Sigmoid colon (tissue), 7 donors: ENCODE measurements at regions of chr10 and their contacts with region 1.

Region 1: GRCh38 chr10:108544494-108545120 is 1378.7 kb downstream of the XPNPEP1 start:
- DNase-seq: peak; percentile 75
- H3K4me3 ChIP-seq: no peak overlapping the region
- H3K27ac ChIP-seq: no peak overlapping the region
- H3K4me1 ChIP-seq: no peaks in the 10 kb centered on the region
- H3K27me3 ChIP-seq: no peaks in the 10 kb centered on the region
- CTCF ChIP-seq: peak in 3 of 4 experiments; percentile 67 to 91 (median 69)
- EP300 ChIP-seq: no peak
- POLR2A ChIP-seq: no peak

Region 2: DNA sequence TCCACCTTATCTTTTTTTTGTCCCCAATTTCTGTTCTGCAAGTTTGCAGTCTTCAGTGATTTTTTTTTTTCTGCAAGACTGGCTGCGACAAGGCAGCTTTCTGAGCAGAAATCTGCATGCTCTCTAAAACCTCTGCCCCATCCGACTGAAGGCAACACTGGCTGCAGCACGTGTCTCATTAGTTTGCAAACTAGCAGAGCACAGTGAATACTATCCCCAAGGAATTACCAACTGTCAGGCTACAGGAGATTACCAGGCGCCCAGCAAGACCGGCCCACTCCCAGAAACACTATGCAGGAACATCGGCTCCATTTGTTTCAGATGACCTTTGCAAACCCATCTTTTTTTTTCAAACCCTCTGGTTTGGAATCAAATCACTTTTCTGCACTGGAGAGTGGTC is 1918.9 kb before region 1 on chr10:
- intact Hi-C with region 1: loop called (anchors 5 kb)
- DNase-seq: no peak
- H3K4me3 ChIP-seq: no peak overlapping the region
- H3K27ac ChIP-seq: no peak overlapping the region
- H3K4me1 ChIP-seq: no peaks in the 10 kb centered on the region
- H3K27me3 ChIP-seq: no peaks in the 10 kb centered on the region
- CTCF ChIP-seq: no peak
- EP300 ChIP-seq: no peak
- POLR2A ChIP-seq: no peak

Region 3: GRCh38 chr10:106705681-106706100 is 1838.9 kb before region 1 on chr10:
- intact Hi-C with region 1: loop called (anchors 5 kb)
- DNase-seq: peak; percentile 81
- H3K4me3 ChIP-seq: no peak overlapping the region
- H3K27ac ChIP-seq: no peak overlapping the region
- H3K4me1 ChIP-seq: peaks cover 0 to 3% (median 0%) of the 10 kb centered on the region in 4 donors
- H3K27me3 ChIP-seq: no peaks in the 10 kb centered on the region
- CTCF ChIP-seq: peak; percentile 25 to 73 (median 61)
- EP300 ChIP-seq: no peak
- POLR2A ChIP-seq: no peak

Region 4: DNA sequence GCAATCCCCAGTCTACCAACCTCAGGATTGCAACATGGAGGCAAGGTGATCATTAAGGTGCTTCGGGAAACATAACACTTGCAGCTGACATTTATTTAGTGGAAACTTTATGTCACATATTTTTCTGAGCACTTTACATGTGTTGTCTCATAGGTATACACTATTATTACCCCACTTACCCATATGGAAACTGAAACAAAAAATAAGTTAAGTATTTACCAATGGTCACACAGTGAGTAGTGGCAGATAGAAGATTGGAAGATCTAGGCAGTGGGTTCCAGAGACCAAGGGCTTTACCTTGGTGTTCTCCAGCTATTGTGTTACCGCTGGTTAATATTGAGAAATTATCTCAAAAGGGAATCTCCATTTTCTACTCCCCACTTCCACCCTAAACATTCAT is 101.0 kb before region 1 on chr10:
- intact Hi-C with region 1: no loop called
- DNase-seq: no peak
- H3K4me3 ChIP-seq: no peak overlapping the region
- H3K27ac ChIP-seq: no peak overlapping the region
- H3K4me1 ChIP-seq: no peaks in the 10 kb centered on the region
- H3K27me3 ChIP-seq: no peaks in the 10 kb centered on the region
- CTCF ChIP-seq: no peak
- EP300 ChIP-seq: no peak
- POLR2A ChIP-seq: no peak

Region 5: GRCh38 chr10:109205929-109206585 is 661.5 kb after region 1 on chr10:
- intact Hi-C with region 1: no loop called
- DNase-seq: no peak
- H3K4me3 ChIP-seq: no peak overlapping the region
- H3K27ac ChIP-seq: no peak overlapping the region
- H3K4me1 ChIP-seq: no peaks in the 10 kb centered on the region
- H3K27me3 ChIP-seq: no peaks in the 10 kb centered on the region
- CTCF ChIP-seq: no peak
- EP300 ChIP-seq: no peak
- POLR2A ChIP-seq: no peak